ENCODE measurements at regions of chr17 and their contacts with region 1.

Region 1: DNA sequence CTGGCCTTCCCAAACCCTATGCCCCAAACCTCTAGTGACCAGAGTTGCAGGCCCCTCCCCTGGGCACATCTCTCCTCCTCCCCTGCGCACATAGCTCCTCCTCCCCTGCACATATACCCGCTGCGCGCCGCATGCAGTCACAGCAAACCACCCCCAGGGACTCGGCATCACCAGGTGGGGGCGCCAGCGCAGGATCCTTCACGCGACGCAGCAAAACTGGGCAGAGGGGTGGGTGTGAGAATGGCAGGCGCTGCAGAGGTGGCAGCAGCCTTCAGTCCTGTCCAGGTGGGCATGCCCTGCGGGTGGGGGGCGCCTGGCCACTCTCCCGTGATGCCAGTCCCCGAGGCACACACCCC is 5.6 kb downstream of the CORO6 start:
- DNase-seq: no peak
- H3K4me3 ChIP-seq: no peak overlapping the region
- H3K27me3 ChIP-seq: no peaks in the 10 kb centered on the region
- CTCF ChIP-seq: peak; percentile 68

Region 2: GRCh38 chr17:29579866-29580771 is 37.0 kb before region 1 on chr17:
- CTCF ChIA-PET with region 1: interaction called, 24 read pairs
- POLR2A ChIA-PET with region 1: no interaction called
- DNase-seq: no peak
- H3K4me3 ChIP-seq: no peak overlapping the region
- H3K27me3 ChIP-seq: no peaks in the 10 kb centered on the region
- CTCF ChIP-seq: peak; percentile 89

Region 3: DNA sequence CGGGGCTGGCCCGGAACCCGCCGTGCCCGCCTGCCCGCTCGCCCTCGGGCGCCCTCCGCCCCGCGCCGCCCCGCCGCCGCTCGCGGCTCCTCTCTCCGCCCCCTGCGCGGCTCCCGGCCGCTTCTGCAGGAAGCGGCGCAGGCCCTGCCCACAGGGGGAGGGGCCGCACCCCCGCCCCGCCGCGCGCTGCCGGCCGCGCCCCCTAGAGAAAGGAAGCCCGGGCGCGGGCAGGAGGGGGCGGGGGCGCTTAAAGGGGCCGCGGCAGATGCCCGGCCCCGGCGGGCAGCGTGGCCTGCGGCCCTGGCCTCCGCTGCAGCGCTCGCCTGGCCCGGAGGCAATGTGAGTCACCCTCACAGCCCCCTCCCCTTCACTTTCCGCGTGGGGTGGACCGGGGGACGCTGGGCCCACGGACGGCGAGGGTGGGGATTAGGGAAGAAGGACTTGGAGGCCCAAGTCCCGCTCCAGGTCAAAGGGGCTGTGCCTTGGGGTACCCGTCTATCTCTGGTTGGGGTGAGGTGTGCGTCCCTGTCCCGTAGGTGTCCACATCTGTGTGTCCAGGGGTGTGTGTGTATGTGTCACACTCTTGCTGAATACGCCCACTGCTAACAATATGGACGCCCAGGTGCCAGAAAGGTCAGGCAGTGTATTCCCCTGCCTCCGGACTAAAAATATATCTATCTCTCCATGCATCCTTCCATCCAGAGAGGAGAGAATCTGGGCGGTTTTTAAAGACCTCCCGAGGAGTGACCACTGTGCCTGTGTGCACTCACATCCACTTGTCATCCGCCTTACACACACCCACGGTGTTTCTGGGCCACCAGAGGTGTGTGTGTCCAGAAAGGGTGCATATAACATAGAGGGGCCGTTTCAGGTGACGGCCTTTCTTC is 27.3 kb before region 1 on chr17 and contains the start of gene GIT1:
- CTCF ChIA-PET with region 1: interaction called, 32 read pairs
- POLR2A ChIA-PET with region 1: no interaction called
- DNase-seq: no peak
- H3K4me3 ChIP-seq: peak within 1 kb of the TSS; percentile 79
- H3K27me3 ChIP-seq: no peaks in the 10 kb centered on the region
- CTCF ChIP-seq: no peak
- polyA plus RNA-seq, gene GIT1: 21.6 and 32.0 TPM in 2 replicates